ENCODE measurements at regions of chr1 and their contacts with region 1.

Region 1: GRCh38 chr1:184075055-184076029 is 23.8 kb downstream of the TSEN15 start:
- DNase-seq: peak in 3 of 9 experiments; percentile 21 to 58 (median 51)
- ATAC-seq: peak; percentile 36
- H3K4me3 ChIP-seq: no peak overlapping the region
- H3K4me3 Mint-ChIP-seq: no peak overlapping the region
- H3K27ac ChIP-seq: no peak overlapping the region
- H3K27ac Mint-ChIP-seq: no peak overlapping the region
- H3K4me1 ChIP-seq: no peaks in the 10 kb centered on the region
- H3K4me1 Mint-ChIP-seq: no peaks in the 10 kb centered on the region
- H3K27me3 ChIP-seq: no peaks in the 10 kb centered on the region
- H3K27me3 Mint-ChIP-seq: no peaks in the 10 kb centered on the region
- CTCF ChIP-seq: peak; percentile 46

Region 2: DNA sequence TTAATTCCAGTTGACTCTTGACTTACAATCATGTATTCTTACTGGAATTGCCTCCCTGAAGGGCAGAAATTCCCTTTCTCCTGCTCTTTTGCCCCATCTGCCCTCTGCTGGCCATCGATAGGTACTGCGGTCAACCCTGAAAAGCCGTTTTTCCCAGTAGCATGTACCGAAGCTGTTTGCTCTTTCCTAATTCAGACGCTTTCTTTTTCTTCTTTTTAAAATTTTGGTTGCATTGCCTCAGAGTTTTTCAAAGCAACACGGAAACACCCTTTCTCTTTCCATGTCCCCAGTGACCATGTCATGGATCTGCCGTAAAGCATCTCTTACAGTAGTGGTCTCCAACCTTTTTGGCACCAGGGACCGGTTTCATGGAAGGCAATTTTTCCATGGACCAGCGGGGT is 147.3 kb after region 1 on chr1:
- CTCF ChIA-PET with region 1: interaction called, 3 read pairs
- POLR2A ChIA-PET with region 1: no interaction called
- intact Hi-C with region 1: loop called (anchors 1 kb)
- DNase-seq: peak in 7 of 9 experiments; percentile 16 to 57 (median 49)
- ATAC-seq: no peak
- H3K4me3 ChIP-seq: no peak overlapping the region
- H3K4me3 Mint-ChIP-seq: no peak overlapping the region
- H3K27ac ChIP-seq: no peak overlapping the region
- H3K27ac Mint-ChIP-seq: no peak overlapping the region
- H3K4me1 ChIP-seq: no peaks in the 10 kb centered on the region
- H3K4me1 Mint-ChIP-seq: no peaks in the 10 kb centered on the region
- H3K27me3 ChIP-seq: no peaks in the 10 kb centered on the region
- H3K27me3 Mint-ChIP-seq: peaks cover 6% of the 10 kb centered on the region
- CTCF ChIP-seq: peak; percentile 85

Region 3: GRCh38 chr1:184664042-184664655 is 588.8 kb after region 1 on chr1:
- CTCF ChIA-PET with region 1: no interaction called
- POLR2A ChIA-PET with region 1: no interaction called
- intact Hi-C with region 1: loop called in 1 of 2 experiments (anchors 1 kb)
- DNase-seq: peak in 7 of 9 experiments; percentile 3 to 60 (median 37)
- ATAC-seq: peak; percentile 51
- H3K4me3 ChIP-seq: peak overlapping the region in 1 of 2 experiments; percentile 8
- H3K4me3 Mint-ChIP-seq: peak overlapping the region; percentile 36
- H3K27ac ChIP-seq: no peak overlapping the region
- H3K27ac Mint-ChIP-seq: no peak overlapping the region
- H3K4me1 ChIP-seq: no peaks in the 10 kb centered on the region
- H3K4me1 Mint-ChIP-seq: peaks cover 6% of the 10 kb centered on the region
- H3K27me3 ChIP-seq: peaks cover 5 to 8% of the 10 kb centered on the region in 2 experiments
- H3K27me3 Mint-ChIP-seq: peaks cover 10% of the 10 kb centered on the region
- CTCF ChIP-seq: peak; percentile 56

Region 4: GRCh38 chr1:184691719-184692324 is 616.5 kb after region 1 on chr1:
- CTCF ChIA-PET with region 1: no interaction called
- POLR2A ChIA-PET with region 1: no interaction called
- intact Hi-C with region 1: loop called (anchors 1 to 10 kb)
- DNase-seq: peak in 2 of 9 experiments; percentile 12 to 19
- ATAC-seq: no peak
- H3K4me3 ChIP-seq: no peak overlapping the region
- H3K4me3 Mint-ChIP-seq: no peak overlapping the region
- H3K27ac ChIP-seq: no peak overlapping the region
- H3K27ac Mint-ChIP-seq: peak overlapping the region; percentile 20
- H3K4me1 ChIP-seq: no peaks in the 10 kb centered on the region
- H3K4me1 Mint-ChIP-seq: no peaks in the 10 kb centered on the region
- H3K27me3 ChIP-seq: no peaks in the 10 kb centered on the region
- H3K27me3 Mint-ChIP-seq: no peaks in the 10 kb centered on the region
- CTCF ChIP-seq: peak; percentile 20

Region 5: GRCh38 chr1:184982002-184982954 is 906.9 kb after region 1 on chr1:
- CTCF ChIA-PET with region 1: no interaction called
- POLR2A ChIA-PET with region 1: no interaction called
- intact Hi-C with region 1: loop called (anchors 5 kb)
- DNase-seq: peak; percentile 57 to 86 (median 78)
- ATAC-seq: peak; percentile 97
- H3K4me3 ChIP-seq: no peak overlapping the region
- H3K4me3 Mint-ChIP-seq: no peak overlapping the region
- H3K27ac ChIP-seq: no peak overlapping the region
- H3K27ac Mint-ChIP-seq: no peak overlapping the region
- H3K4me1 ChIP-seq: no peaks in the 10 kb centered on the region
- H3K4me1 Mint-ChIP-seq: peaks cover 5% of the 10 kb centered on the region
- H3K27me3 ChIP-seq: no peaks in the 10 kb centered on the region
- H3K27me3 Mint-ChIP-seq: peaks cover 20% of the 10 kb centered on the region
- CTCF ChIP-seq: peak; percentile 87

Region 6: DNA sequence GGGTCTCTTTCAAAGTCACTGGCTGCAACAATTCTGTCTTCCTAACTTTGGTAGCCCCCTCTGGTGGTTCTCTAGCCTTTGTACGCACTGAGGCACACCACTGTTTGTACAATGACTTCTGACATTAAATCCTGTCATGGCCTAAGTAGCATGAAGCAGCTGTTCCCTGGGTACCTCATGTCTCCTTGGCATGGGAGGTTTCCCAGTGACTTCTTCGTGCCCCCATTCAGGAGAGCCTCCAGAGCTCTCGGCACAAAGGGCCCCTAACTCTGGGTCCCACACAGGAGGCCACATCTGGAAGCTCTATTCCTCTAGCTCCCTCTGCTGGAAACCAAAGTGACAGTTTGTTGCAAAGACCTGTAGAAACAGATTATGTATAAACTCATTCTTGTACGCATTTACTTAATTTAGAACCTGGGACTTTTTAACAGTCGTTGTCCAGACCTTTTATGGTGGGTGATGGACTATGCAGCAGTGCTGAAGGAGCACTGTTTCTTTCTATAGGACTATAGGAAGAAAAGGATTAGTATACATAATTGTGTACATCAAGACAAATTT is 1095.0 kb after region 1 on chr1:
- CTCF ChIA-PET with region 1: no interaction called
- POLR2A ChIA-PET with region 1: no interaction called
- intact Hi-C with region 1: loop called in 1 of 2 experiments (anchors 10 kb)
- DNase-seq: peak in 7 of 9 experiments; percentile 23 to 76 (median 53)
- ATAC-seq: peak; percentile 93
- H3K4me3 ChIP-seq: no peak overlapping the region
- H3K4me3 Mint-ChIP-seq: peak overlapping the region; percentile 42
- H3K27ac ChIP-seq: no peak overlapping the region
- H3K27ac Mint-ChIP-seq: peak overlapping the region; percentile 10
- H3K4me1 ChIP-seq: no peaks in the 10 kb centered on the region
- H3K4me1 Mint-ChIP-seq: peaks cover 3% of the 10 kb centered on the region
- H3K27me3 ChIP-seq: no peaks in the 10 kb centered on the region
- H3K27me3 Mint-ChIP-seq: no peaks in the 10 kb centered on the region
- CTCF ChIP-seq: peak; percentile 80

Measured in CD8-positive, alpha-beta T cell (primary cell).